Posterior vena cava (tissue), 2 donors: ENCODE measurements at regions of chr5 and their contacts with region 1.

Region 1: GRCh38 chr5:123505633-123506032 is 6.3 kb upstream of the CSNK1G3 start:
- DNase-seq: no peak

Region 2: GRCh38 chr5:123472150-123472924 is 33.3 kb before region 1 on chr5:
- intact Hi-C with region 1: loop called in 1 of 2 experiments (anchors 1 kb)
- DNase-seq: no peak

Region 3: DNA sequence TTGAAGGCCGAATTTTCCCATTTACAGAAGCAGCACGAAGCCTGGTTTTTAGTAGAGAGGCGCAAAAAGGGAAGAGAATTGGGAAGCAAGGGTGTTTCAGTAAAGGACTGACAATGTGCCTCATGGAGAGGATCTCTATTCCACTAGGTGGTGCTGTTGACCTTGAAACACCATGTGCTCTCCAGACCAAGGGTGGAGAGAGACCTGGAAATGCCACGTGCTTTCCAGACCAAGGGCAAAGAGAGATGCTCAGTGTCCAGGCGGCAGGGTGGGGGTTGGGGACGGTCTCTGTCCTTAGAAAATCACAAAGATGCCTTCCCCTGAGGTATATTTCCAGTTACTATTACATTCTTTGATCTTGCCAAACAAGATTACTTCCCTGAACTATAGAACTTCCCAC is 431.6 kb after region 1 on chr5:
- intact Hi-C with region 1: no loop called
- DNase-seq: no peak